GM10248 (cell line): ENCODE measurements at regions of chr20 and their contacts with region 1.

Region 1: GRCh38 chr20:13771853-13772453 is 12.8 kb downstream of the ESF1 start:
- DNase-seq: peak; percentile 31
- CTCF ChIP-seq: no peak

Region 2: GRCh38 chr20:13119583-13119982 is 652.4 kb before region 1 on chr20:
- CTCF ChIA-PET with region 1: interaction called, 15 read pairs
- POLR2A ChIA-PET with region 1: no interaction called
- DNase-seq: peak; percentile 39
- CTCF ChIP-seq: peak; percentile 93

Region 3: GRCh38 chr20:13325033-13325432 is 446.9 kb before region 1 on chr20:
- CTCF ChIA-PET with region 1: interaction called, 11 read pairs
- POLR2A ChIA-PET with region 1: no interaction called
- DNase-seq: no peak
- CTCF ChIP-seq: peak; percentile 35

Region 4: DNA sequence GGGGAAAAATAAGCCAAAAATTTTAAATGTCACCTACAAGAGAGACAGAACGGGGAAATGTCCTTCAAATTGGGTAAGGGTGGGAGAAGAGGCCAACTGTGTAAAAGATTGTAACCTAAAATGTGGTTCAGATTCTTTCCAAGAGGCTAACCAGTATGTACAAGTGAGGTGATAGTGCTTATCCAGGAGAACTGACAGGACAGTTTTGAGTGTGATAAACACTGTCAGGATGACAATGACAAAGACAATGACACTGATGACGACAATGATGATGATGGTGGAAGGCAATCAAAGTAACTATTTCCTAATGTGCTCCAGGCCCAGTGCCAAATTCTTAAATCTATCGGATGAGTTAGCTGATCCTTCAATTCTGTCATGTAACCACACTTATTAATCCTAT is 190.5 kb before region 1 on chr20:
- CTCF ChIA-PET with region 1: no interaction called
- POLR2A ChIA-PET with region 1: no interaction called
- DNase-seq: no peak
- CTCF ChIP-seq: no peak

Region 5: GRCh38 chr20:13610184-13610583 is 161.8 kb before region 1 on chr20:
- CTCF ChIA-PET with region 1: interaction called, 11 read pairs
- POLR2A ChIA-PET with region 1: no interaction called
- DNase-seq: no peak
- CTCF ChIP-seq: peak; percentile 21

Region 6: DNA sequence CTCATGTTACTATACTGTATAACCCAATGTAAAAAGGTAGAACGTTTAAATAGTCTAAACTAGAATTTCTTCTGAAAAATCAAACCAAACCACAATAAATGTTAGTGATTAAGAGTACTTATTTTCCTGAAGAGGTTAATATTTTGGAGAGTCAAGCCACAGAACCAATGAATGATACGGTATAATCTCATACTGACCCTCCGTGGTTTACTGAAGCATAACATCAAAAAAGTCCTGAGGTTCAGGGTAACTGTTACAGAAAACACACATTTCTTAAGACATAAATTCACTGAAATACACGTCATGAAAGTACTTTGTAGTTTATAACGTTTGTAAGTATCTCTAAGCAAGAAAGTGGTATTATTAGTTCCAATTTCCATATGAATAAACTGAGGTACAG is 16.1 kb before region 1 on chr20:
- CTCF ChIA-PET with region 1: interaction called, 30 read pairs
- POLR2A ChIA-PET with region 1: no interaction called
- DNase-seq: no peak
- CTCF ChIP-seq: no peak

Region 7: GRCh38 chr20:13784893-13785715 is 13.2 kb after region 1 on chr20 and contains the starts of genes ESF1 and NDUFAF5:
- CTCF ChIA-PET with region 1: interaction called, 40 read pairs
- POLR2A ChIA-PET with region 1: no interaction called
- DNase-seq: peak; percentile 93
- CTCF ChIP-seq: no peak